ENCODE measurements at regions of chr13 and their contacts with region 1.

Region 1: DNA sequence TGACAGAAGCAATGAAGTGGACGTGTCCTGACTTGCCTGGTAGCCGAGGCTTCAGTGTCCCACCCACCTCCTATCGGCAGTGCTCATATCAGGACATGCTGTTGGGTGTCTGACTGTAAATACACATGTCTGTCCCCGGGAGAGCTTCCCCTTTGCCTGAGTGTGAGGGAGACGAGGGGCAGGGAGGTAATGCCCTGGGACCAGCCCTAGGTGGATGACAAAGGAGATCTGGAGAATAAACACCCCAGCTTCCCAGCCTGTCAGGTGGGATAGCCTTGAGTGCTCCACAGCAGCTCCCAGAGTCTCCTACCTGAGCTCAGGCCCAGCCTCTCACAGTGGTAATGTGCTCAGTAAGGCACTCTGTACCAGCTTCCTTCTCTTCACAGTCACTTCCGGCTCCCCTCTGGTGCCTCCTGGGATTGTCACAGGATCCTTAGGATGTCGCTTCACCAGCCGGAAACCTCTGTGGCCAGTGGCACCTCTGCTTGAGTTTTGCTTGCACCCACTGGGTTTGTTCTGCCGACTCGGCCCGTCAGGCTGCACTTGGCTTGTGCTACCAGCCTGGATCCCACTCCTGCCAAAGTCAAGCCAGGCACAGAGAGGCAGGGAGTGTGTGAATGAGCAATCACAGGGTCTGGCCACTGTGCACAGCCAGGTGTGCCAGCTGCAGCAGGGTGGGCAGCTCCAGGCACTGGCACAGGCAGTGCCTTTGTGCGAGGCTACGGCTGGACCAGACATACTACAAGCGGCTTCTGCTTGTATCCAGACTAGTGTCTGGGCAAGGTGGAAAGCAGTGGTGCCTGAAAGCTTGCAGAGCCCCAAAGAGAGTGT is 54.5 kb upstream of the RGCC start:
- DNase-seq: no peak
- H3K4me3 Mint-ChIP-seq: no peak overlapping the region
- H3K27ac Mint-ChIP-seq: no peak overlapping the region
- H3K4me1 Mint-ChIP-seq: no peaks in the 10 kb centered on the region
- H3K27me3 Mint-ChIP-seq: no peaks in the 10 kb centered on the region

Region 2: GRCh38 chr13:41428155-41428554 is 25.3 kb after region 1 on chr13:
- intact Hi-C with region 1: loop called (anchors 2 kb)
- DNase-seq: no peak
- H3K4me3 Mint-ChIP-seq: no peak overlapping the region
- H3K27ac Mint-ChIP-seq: no peak overlapping the region
- H3K4me1 Mint-ChIP-seq: peaks cover 14% of the 10 kb centered on the region
- H3K27me3 Mint-ChIP-seq: peaks cover 7% of the 10 kb centered on the region

Region 3: GRCh38 chr13:42181381-42181953 is 778.6 kb after region 1 on chr13:
- intact Hi-C with region 1: no loop called
- DNase-seq: no peak
- H3K4me3 Mint-ChIP-seq: no peak overlapping the region
- H3K27ac Mint-ChIP-seq: no peak overlapping the region
- H3K4me1 Mint-ChIP-seq: no peaks in the 10 kb centered on the region
- H3K27me3 Mint-ChIP-seq: no peaks in the 10 kb centered on the region